CD4-positive, alpha-beta memory T cell (primary cell): ENCODE measurements at regions of chr19 and their contacts with region 1.

Region 1: GRCh38 chr19:14432791-14433553 is at the start of gene PKN1:
- DNase-seq: peak in 3 of 5 donors; percentile 20 to 55 (median 22)
- H3K4me3 ChIP-seq: peak within 1 kb of the TSS; percentile 60 to 61
- H3K4me3 Mint-ChIP-seq: peak within 1 kb of the TSS; percentile 83 to 93 (median 88)
- H3K27ac ChIP-seq: peak within 1 kb of the TSS; percentile 72
- H3K27ac Mint-ChIP-seq: peak within 1 kb of the TSS; percentile 84 to 95 (median 89)
- H3K4me1 ChIP-seq: peaks cover 31% of the 10 kb centered on the region
- H3K4me1 Mint-ChIP-seq: peaks cover 16 to 49% (median 33%) of the 10 kb centered on the region in 4 donors
- H3K27me3 ChIP-seq: no peaks in the 10 kb centered on the region
- H3K27me3 Mint-ChIP-seq: no peaks in the 10 kb centered on the region
- total RNA-seq, gene PKN1: 189 to 205 TPM

Region 2: DNA sequence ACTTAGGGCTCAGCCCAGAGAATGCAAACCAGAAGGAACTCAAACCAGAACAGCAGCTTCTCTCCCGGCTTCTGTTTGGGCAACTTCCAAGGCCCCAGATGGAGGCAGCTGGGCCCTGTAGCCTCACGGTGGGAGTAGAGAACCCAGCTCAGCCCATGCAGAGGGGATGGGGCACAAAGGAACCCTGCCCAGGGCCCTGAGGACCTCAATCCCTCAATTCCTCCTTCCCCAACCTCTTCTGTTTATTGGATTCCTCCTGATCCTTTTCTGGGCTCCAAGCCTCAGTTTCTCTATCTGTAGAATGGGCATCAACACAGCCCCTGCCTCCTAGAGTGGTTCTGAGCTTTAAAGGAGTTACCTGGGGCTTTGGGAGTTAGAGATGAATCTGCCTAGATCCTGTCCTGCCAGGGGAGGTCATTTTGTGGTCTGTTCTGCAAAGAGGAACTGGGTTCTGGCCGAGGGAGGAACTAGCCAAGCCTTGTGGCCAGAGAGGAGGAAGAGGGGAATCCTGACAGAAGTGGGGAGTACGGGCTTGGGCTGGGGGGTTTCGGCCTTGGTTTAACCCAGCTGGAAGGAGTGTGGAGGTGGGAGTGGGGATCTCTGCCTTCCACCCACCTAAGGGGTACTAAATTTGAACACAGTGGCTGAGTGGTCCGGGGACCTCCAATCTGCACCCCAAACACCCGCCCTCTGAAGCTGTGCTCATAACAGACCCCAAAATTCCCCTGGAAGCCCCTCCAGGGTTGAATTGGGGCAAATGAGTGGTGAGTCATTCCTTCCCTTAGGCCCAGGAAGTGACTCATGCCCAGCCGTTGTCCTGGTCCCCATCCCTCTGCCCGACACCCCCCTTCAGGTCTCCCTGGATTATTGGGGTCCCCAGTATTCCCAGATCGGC is 49.1 kb before region 1 on chr19:
- CTCF ChIA-PET with region 1: interaction called, 4 read pairs
- POLR2A ChIA-PET with region 1: interaction called, 10 read pairs
- intact Hi-C with region 1: no loop called
- DNase-seq: peak in 3 of 5 donors; percentile 40 to 91 (median 41)
- H3K4me3 ChIP-seq: peak overlapping the region; percentile 40 to 82
- H3K4me3 Mint-ChIP-seq: peak overlapping the region; percentile 91 to 99 (median 98)
- H3K27ac ChIP-seq: peak overlapping the region; percentile 99
- H3K27ac Mint-ChIP-seq: peak overlapping the region; percentile 96 to 100 (median 98)
- H3K4me1 ChIP-seq: peaks cover 41% of the 10 kb centered on the region
- H3K4me1 Mint-ChIP-seq: peaks cover 19 to 66% (median 37%) of the 10 kb centered on the region in 4 donors
- H3K27me3 ChIP-seq: no peaks in the 10 kb centered on the region
- H3K27me3 Mint-ChIP-seq: peaks cover 0 to 4% of the 10 kb centered on the region in 2 donors

Region 3: DNA sequence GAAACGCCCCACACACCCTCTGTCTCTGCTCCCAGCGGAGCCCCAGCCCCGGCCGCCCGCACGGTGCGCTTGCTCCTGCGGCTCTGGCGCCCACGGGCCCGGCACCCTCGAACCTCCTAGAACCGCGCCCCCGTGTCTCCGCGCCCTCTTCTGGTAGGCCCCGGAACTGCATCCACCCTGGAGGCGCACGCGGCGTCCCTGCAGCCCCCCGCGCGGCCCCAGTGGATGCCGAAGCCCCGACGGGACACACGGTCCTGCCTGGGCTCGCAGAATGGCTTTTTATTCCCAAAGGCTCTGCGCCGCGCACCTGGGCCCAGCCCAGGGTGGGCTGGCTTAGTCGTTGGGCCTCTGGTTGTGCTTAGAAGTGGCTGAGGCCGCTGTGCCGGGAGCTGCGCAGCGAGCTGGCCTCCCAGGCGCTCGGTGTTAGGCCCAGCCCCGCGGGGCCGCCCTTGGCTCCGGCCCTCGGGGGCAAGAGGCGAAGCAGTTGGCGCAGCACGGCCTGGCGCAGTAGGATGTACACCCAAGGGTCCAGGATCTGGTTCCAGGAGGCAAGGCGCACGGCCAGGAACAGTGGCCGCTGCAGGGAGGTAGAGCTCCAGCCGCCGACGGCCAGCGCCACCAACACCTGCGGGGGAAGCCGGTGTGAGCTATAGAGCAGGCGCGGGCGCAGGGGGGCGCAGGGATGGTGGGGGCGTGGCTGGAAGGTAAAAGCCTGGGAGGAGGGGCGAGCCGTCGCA is 39.4 kb after region 1 on chr19:
- CTCF ChIA-PET with region 1: interaction called, 28 read pairs
- POLR2A ChIA-PET with region 1: interaction called, 17 read pairs
- intact Hi-C with region 1: loop called (anchors 1 kb)
- DNase-seq: peak; percentile 78 to 84 (median 79)
- H3K4me3 ChIP-seq: peak overlapping the region in 1 of 2 donors; percentile 19
- H3K4me3 Mint-ChIP-seq: peak overlapping the region in 7 of 8 donors; percentile 25 to 76 (median 61)
- H3K27ac ChIP-seq: no peak overlapping the region
- H3K27ac Mint-ChIP-seq: no peak overlapping the region
- H3K4me1 ChIP-seq: peaks cover 36% of the 10 kb centered on the region
- H3K4me1 Mint-ChIP-seq: peaks cover 14 to 35% (median 25%) of the 10 kb centered on the region in 4 donors
- H3K27me3 ChIP-seq: peaks cover 14% of the 10 kb centered on the region
- H3K27me3 Mint-ChIP-seq: peaks cover 7 to 20% of the 10 kb centered on the region in 2 donors